ENCODE measurements at regions of chr3 and their contacts with region 1.

Region 1: GRCh38 chr3:185308126-185308754 is 54.4 kb upstream of the EHHADH start:
- DNase-seq: peak; percentile 59
- H3K4me3 ChIP-seq: no peak overlapping the region
- H3K27ac ChIP-seq: no peak overlapping the region
- H3K4me1 ChIP-seq: no peaks in the 10 kb centered on the region
- H3K27me3 ChIP-seq: no peaks in the 10 kb centered on the region
- CTCF ChIP-seq: peak; percentile 74 to 88

Region 2: GRCh38 chr3:185176750-185177359 is 131.4 kb before region 1 on chr3:
- CTCF ChIA-PET with region 1: no interaction called
- dilution Hi-C with region 1: no loop called
- in situ Hi-C with region 1: no loop called
- intact Hi-C with region 1: loop called (anchors 2 kb)
- DNase-seq: no peak
- H3K4me3 ChIP-seq: no peak overlapping the region
- H3K27ac ChIP-seq: no peak overlapping the region
- H3K4me1 ChIP-seq: no peaks in the 10 kb centered on the region
- H3K27me3 ChIP-seq: no peaks in the 10 kb centered on the region
- CTCF ChIP-seq: peak; percentile 56 to 63